ENCODE measurements at regions of chr6 and their contacts with region 1.

Region 1: GRCh38 chr6:31271641-31272357 is at the start of gene HLA-C:
- DNase-seq: peak; percentile 92 to 96 (median 93)
- ATAC-seq: peak; percentile 94
- H3K4me3 ChIP-seq: peak within 1 kb of the TSS; percentile 100
- H3K4me1 ChIP-seq: peaks cover 24% of the 10 kb centered on the region
- CTCF ChIP-seq: no peak
- total RNA-seq, gene HLA-C: 965 to 2,616 (median 1,478) TPM

Region 2: GRCh38 chr6:31356946-31357466 is 85.2 kb after region 1 on chr6 and contains the start of gene HLA-B:
- intact Hi-C with region 1: loop called in 1 of 2 experiments (anchors 10 kb)
- DNase-seq: peak; percentile 75 to 93 (median 87)
- ATAC-seq: peak; percentile 94
- H3K4me3 ChIP-seq: peak within 1 kb of the TSS; percentile 99
- H3K4me1 ChIP-seq: peaks cover 24% of the 10 kb centered on the region
- CTCF ChIP-seq: no peak
- total RNA-seq, gene HLA-B: 1,294 to 6,470 (median 3,045) TPM